B cell (primary cell): ENCODE measurements at regions of chr2 and their contacts with region 1.

Region 1: DNA sequence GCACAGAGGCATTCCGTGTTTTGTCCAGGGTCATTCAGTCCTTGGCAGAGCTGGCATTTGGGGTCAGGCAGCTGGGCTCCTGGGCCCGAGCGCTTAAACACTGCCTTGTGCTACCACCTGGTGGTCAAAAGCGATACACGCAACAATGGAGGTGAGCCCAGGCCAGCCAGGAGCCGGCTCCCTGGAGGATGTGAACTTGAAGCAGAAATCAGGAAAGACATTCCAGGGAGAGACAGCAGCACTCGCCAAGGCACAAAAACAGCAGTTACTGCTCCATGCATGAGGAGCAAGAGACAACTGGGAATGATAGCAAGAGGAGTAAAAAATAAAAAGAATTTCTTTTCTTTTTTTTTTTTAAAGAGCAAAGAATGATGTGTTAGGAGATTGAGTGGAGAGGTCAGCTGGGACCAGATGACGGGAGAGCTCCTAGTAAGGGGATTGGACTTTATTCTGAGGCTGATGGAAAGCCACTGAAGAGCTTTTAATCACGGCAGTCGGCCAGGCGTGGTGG is 20.7 kb downstream of the SCYGR8 start:
- DNase-seq: peak; percentile 72
- ATAC-seq: peak; percentile 88
- H3K4me3 ChIP-seq: no peak overlapping the region
- H3K4me3 Mint-ChIP-seq: no peak overlapping the region
- H3K27ac ChIP-seq: no peak overlapping the region
- H3K27ac Mint-ChIP-seq: no peak overlapping the region
- H3K4me1 ChIP-seq: no peaks in the 10 kb centered on the region
- H3K4me1 Mint-ChIP-seq: no peaks in the 10 kb centered on the region
- H3K27me3 ChIP-seq: no peaks in the 10 kb centered on the region
- H3K27me3 Mint-ChIP-seq: peaks cover 3% of the 10 kb centered on the region
- CTCF ChIP-seq: peak; percentile 86

Region 2: GRCh38 chr2:227125506-227125905 is 640.9 kb before region 1 on chr2:
- CTCF ChIA-PET with region 1: interaction called, 34 read pairs
- POLR2A ChIA-PET with region 1: no interaction called
- intact Hi-C with region 1: no loop called
- DNase-seq: no peak
- ATAC-seq: no peak
- H3K4me3 ChIP-seq: no peak overlapping the region
- H3K4me3 Mint-ChIP-seq: no peak overlapping the region
- H3K27ac ChIP-seq: no peak overlapping the region
- H3K27ac Mint-ChIP-seq: no peak overlapping the region
- H3K4me1 ChIP-seq: no peaks in the 10 kb centered on the region
- H3K4me1 Mint-ChIP-seq: no peaks in the 10 kb centered on the region
- H3K27me3 ChIP-seq: peaks cover 0 to 5% (median 0%) of the 10 kb centered on the region in 4 experiments
- H3K27me3 Mint-ChIP-seq: no peaks in the 10 kb centered on the region
- CTCF ChIP-seq: no peak

Region 3: DNA sequence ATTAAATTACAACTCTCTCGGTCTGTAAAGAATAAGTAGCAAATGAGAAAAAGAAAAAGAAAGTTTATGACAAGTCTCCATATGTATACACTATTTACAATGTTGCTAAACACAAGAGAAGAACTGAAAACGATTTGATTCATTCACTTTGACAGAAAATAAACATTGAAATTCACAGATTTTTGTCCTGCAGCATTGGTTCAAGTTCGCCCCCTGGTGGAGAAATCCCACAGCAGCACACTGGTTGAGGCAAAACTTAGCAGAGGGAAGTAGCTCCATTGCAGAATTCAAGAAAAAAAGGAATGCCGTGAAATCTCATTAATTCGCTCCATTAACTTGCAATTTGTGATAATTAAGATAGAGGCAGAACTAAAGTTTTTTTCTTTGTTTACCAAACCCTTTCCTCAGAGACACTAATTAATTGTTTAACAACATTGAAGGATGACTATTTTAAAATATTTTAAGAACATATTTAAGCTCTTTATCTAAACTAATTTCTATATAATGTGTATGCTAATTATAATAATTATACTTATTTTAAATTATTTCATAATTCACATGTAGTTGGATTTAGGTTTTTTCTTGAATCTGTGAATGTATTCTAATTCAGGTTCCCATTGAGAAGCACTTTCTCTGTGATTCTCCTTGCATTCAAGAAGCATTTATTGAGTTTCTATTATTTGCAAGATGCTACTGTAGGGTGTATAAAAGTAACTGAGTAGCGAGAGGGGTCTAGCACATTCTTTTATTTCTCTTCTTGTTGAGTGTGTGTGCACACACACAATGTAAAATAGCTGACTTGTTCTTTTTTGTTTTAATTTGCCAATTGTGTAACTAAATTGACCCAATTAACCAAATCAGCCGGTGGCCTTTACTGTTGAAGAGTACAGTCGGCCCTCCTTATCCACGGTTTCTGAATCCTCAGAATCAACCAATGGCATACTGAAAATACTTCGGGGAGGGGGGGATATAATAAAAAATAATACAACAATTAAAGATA is 527.9 kb before region 1 on chr2:
- CTCF ChIA-PET with region 1: interaction called, 44 read pairs
- POLR2A ChIA-PET with region 1: no interaction called
- intact Hi-C with region 1: loop called (anchors 1 kb)
- DNase-seq: peak; percentile 66
- ATAC-seq: peak; percentile 33
- H3K4me3 ChIP-seq: no peak overlapping the region
- H3K4me3 Mint-ChIP-seq: no peak overlapping the region
- H3K27ac ChIP-seq: no peak overlapping the region
- H3K27ac Mint-ChIP-seq: no peak overlapping the region
- H3K4me1 ChIP-seq: no peaks in the 10 kb centered on the region
- H3K4me1 Mint-ChIP-seq: no peaks in the 10 kb centered on the region
- H3K27me3 ChIP-seq: no peaks in the 10 kb centered on the region
- H3K27me3 Mint-ChIP-seq: no peaks in the 10 kb centered on the region
- CTCF ChIP-seq: peak; percentile 97

Region 4: GRCh38 chr2:227406177-227407031 is 360.0 kb before region 1 on chr2:
- CTCF ChIA-PET with region 1: interaction called, 55 read pairs
- POLR2A ChIA-PET with region 1: no interaction called
- intact Hi-C with region 1: loop called (anchors 1 kb)
- DNase-seq: no peak
- ATAC-seq: no peak
- H3K4me3 ChIP-seq: no peak overlapping the region
- H3K4me3 Mint-ChIP-seq: no peak overlapping the region
- H3K27ac ChIP-seq: no peak overlapping the region
- H3K27ac Mint-ChIP-seq: no peak overlapping the region
- H3K4me1 ChIP-seq: peaks cover 29 to 32% of the 10 kb centered on the region in 2 donors
- H3K4me1 Mint-ChIP-seq: peaks cover 41% of the 10 kb centered on the region
- H3K27me3 ChIP-seq: no peaks in the 10 kb centered on the region
- H3K27me3 Mint-ChIP-seq: no peaks in the 10 kb centered on the region
- CTCF ChIP-seq: peak; percentile 13

Region 5: GRCh38 chr2:227479865-227480475 is 286.5 kb before region 1 on chr2:
- CTCF ChIA-PET with region 1: interaction called, 29 read pairs
- POLR2A ChIA-PET with region 1: interaction called, 7 read pairs
- intact Hi-C with region 1: no loop called
- DNase-seq: peak; percentile 35
- ATAC-seq: no peak
- H3K4me3 ChIP-seq: no peak overlapping the region
- H3K4me3 Mint-ChIP-seq: no peak overlapping the region
- H3K27ac ChIP-seq: peak overlapping the region in 1 of 2 donors; percentile 63
- H3K27ac Mint-ChIP-seq: no peak overlapping the region
- H3K4me1 ChIP-seq: peaks cover 20 to 40% of the 10 kb centered on the region in 2 donors
- H3K4me1 Mint-ChIP-seq: peaks cover 61% of the 10 kb centered on the region
- H3K27me3 ChIP-seq: no peaks in the 10 kb centered on the region
- H3K27me3 Mint-ChIP-seq: no peaks in the 10 kb centered on the region
- CTCF ChIP-seq: peak; percentile 44